ENCODE measurements at regions of chr3 and their contacts with region 1.

Region 1: DNA sequence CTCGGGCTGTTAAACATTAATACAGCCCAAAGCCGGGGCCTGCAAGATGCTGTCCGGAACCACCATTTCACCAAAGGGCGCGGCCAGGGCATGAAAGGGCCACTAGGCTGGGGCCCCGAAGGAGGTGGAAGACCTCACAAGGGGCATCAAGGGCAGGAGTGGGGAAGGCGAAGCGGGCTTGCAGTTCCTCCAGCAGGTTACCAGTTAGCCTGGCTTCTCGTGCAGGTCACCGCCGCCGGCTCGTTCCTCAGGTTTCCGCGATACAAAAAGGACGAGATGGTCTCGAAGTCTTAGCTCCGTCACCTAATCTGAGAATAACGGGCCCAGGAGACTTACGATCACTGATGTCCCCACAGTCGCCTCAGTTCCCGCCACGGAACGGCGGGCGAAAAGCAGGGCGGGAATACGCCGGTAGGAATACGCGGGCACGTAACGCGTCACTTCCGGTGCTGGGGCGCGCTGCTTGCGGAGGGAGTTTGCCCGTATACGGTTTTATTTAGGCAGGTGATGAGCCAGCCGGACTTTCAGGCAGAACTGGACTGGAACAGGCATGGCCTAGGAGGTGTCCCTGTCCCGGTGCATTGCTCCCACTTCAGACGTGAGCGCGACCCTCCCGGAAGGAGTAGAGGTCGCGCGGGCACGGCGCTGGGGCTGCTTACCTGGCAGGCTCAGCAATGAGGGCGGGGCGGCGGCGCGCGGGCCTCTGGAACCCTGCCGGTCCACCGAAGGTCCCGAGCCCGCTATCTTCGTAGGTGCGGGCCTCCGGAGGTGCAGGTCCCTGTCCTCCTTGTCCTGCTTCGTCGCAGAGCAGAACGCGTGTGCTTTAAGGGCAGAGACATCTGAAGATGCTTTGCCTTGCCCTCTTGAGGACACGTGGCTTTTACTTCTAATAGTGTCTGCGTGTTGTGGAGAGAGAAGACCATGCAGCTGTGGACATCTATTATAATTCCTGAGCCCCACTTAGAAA is at the start of gene RFC4:
- DNase-seq: peak; percentile 57
- H3K4me3 ChIP-seq: peak within 1 kb of the TSS; percentile 88
- H3K27ac ChIP-seq: peak within 1 kb of the TSS; percentile 58
- H3K27me3 ChIP-seq: no peaks in the 10 kb centered on the region
- CTCF ChIP-seq: no peak

Region 2: GRCh38 chr3:186617038-186617946 is 189.1 kb before region 1 on chr3:
- in situ Hi-C with region 1: loop called (anchors 25 kb)
- DNase-seq: peak; percentile 93
- H3K4me3 ChIP-seq: peak overlapping the region; percentile 15
- H3K27ac ChIP-seq: no peak overlapping the region
- H3K27me3 ChIP-seq: no peaks in the 10 kb centered on the region
- CTCF ChIP-seq: peak; percentile 98

Region 3: DNA sequence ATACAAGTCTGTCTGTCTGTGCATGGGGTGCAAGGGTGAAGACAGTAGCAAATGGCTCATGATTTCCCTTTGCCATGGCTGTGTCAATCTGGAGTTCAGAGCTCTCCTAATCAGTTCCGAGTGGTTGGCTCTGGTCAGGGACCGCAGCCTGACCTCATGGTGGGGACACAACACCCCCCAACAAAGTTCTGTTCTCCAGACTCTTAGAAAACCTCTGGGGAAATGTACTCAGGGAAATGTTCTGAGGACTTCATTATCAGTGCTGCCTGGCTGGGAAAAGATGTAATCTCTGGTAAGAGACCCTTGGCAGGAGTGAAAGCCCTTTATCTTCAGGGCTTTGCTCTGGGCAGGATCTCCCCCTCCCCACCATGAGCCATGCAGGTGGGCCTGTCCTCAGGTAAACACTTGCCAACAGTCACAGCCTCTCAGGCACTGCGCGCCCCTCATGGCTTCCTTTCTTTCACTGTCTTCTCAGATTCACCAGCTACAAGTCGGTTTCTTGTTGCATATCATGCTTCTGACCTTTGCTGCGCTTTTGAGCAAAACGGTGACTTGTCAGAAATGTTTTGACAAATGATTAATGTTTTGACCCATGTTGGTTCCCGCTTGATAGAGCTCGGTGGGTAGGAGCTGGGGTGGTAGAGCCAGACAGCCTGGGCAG is 219.4 kb after region 1 on chr3:
- in situ Hi-C with region 1: no loop called
- DNase-seq: no peak
- H3K4me3 ChIP-seq: no peak overlapping the region
- H3K27ac ChIP-seq: no peak overlapping the region
- H3K27me3 ChIP-seq: no peaks in the 10 kb centered on the region
- CTCF ChIP-seq: no peak

Measured in brain microvascular endothelial cell (primary cell).